AG04449 (cell line): ENCODE measurements at regions of chr12 and their contacts with region 1.

Region 1: GRCh38 chr12:57111031-57111734 is at the start of gene STAT6:
- DNase-seq: no peak
- H3K4me3 ChIP-seq: peak within 1 kb of the TSS; percentile 73
- CTCF ChIP-seq: no peak

Region 2: DNA sequence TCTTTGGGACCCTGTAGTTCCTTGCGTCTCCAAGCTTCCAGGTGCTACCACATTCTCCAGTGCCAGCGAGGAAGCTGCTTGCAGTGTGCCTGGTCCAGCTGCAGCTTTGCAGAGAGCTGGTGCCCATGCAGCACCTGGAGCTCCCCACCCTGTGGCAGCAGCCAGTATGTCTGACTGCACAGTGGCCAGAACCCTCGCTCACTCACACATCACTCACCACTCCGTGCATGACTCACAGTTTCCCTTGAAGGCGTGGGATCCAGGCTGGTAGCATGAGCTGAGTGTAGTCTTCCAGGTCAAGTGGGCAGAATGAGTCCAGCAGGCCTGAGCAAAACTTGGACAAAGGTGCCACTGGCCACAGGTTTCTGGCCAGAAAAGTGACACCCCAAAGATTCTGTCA is 210.6 kb before region 1 on chr12:
- CTCF ChIA-PET with region 1: no interaction called
- POLR2A ChIA-PET with region 1: no interaction called
- DNase-seq: no peak
- H3K4me3 ChIP-seq: no peak overlapping the region
- CTCF ChIP-seq: no peak

Region 3: GRCh38 chr12:57005980-57006808 is 105.0 kb before region 1 on chr12 and contains the start of gene ZBTB39:
- CTCF ChIA-PET with region 1: interaction called, 26 read pairs
- POLR2A ChIA-PET with region 1: interaction called, 3 read pairs
- DNase-seq: no peak
- H3K4me3 ChIP-seq: peak within 1 kb of the TSS; percentile 78
- CTCF ChIP-seq: peak; percentile 64

Region 4: DNA sequence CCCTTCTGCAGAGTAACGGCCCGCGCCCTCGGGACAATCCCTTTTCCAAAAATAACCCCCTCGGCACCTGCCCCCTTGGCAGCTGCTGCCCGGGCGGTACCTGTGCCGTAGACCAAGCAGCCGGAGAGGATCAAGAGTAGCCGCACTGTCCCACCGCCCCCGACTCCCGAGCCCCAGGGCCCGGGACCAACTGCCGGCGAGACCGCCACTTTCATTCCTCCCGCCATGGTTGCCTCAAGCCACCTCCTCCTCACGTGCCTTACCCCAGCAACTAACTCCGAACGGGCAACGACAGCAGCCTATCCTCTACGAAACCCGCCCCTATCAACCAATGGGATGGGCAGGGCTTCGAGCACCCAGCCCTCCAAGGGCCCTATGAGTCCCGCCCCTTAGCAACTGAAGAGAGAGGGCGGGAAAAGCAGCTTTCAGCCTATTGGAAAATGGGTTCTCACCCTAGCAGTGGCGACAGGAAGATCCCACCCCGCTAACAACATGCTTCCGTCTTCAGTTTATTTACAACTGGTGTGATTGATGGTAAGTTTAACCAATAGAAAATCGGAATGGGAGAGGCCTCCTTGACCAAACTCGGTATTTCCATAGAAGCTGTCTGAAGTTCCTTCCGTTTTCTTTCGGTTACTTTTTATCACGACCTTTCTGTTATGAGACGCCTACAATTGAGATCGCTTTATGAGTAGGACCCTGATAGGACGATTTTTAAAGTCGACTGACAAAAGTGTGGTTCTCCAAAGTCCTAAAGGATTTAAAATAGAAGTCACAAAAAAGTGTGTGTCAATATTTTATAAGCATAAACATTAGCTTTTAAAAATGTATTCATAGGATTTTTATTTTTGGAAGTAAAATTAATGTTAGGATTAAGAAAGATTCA is 32.4 kb before region 1 on chr12 and contains the start of gene NEMP1:
- CTCF ChIA-PET with region 1: interaction called, 148 read pairs
- POLR2A ChIA-PET with region 1: interaction called, 17 read pairs
- DNase-seq: peak; percentile 100
- H3K4me3 ChIP-seq: peak within 1 kb of the TSS; percentile 77
- CTCF ChIP-seq: no peak

Region 5: DNA sequence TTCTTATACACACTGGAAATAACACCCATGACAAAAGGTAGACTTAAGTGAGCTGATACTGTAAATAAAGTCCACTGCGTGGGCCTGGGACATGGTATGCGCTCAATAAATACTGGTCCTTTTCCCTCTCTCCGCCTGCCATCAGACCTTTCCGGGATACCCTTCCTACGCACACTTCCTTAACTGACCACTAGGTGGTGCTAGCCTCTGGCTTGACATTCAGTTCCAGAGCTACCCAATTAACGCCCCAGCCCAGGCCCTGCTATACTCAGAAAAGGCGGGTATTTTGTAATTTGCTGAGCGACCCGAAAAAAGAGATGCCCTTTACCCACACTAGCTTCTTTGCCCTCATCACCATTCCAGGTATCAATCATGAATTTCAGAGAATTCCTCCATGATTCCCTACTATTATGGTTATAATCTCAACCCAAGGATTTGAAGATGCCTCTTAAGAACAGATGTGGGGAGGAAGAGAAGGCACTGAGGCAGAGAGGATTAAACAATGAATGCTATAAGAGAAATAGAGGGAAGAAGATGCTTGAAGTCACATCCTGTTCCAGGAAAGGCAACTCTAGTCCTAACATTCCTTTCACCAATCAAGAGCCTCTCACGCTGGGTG is 13.2 kb after region 1 on chr12:
- CTCF ChIA-PET with region 1: interaction called, 160 read pairs
- POLR2A ChIA-PET with region 1: interaction called, 23 read pairs
- DNase-seq: no peak
- H3K4me3 ChIP-seq: no peak overlapping the region
- CTCF ChIP-seq: peak; percentile 88

Region 6: DNA sequence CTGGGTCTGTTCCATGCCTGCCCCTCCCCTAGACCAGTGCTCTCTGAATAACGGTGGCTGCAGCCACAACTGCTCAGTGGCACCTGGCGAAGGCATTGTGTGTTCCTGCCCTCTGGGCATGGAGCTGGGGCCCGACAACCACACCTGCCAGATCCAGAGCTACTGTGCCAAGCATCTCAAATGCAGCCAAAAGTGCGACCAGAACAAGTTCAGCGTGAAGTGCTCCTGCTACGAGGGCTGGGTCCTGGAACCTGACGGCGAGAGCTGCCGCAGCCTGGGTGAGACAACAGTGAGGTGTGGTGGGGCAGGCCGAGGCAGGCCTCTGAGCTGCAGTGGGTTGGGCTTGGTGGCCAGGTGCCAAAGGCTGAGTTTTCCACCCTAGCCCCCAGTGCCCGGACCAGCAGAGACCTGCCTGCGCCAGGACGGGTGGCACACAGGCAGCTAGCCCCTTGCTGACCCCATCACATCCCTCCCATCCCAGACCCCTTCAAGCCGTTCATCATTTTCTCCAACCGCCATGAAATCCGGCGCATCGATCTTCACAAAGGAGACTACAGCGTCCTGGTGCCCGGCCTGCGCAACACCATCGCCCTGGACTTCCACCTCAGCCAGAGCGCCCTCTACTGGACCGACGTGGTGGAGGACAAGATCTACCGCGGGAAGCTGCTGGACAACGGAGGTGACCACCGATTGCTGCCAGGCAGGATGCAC is 64.4 kb after region 1 on chr12:
- CTCF ChIA-PET with region 1: interaction called, 874 read pairs
- POLR2A ChIA-PET with region 1: interaction called, 3 read pairs
- DNase-seq: no peak
- H3K4me3 ChIP-seq: no peak overlapping the region
- CTCF ChIP-seq: peak; percentile 91

Region 7: DNA sequence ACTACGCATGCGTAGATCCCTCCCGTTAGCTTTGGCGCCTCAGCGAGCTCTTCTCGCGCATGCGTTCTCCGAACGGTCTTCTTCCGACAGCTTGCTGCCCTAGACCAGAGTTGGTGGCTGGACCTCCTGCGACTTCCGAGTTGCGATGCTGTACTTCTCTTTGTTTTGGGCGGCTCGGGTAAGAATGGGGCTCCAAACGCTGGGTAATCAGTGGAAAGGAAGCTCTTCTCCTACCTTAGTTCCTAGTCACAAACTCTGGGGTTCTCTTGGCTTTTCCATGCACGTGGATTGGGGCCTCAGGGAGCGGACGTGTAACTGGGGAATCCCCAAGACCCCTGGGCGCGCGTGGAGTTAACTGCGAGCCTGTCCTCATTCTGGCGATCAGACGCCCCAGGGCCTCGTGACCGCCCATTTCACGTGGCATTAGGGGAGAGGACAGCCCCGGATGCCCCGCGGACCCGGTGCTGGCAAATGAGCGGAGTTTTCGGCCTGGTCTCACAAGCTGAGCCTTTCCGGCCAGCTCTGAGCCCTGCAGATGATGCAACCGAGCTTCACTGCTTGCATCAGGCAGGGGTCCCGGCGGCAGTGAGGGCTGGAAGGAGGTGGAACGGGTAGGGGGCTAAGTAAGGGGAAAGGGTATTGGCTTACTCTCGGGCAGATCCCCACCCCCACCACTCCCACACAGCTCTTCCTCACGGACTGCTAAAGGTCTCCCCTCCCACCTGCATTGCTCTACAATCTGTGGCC is 118.6 kb after region 1 on chr12 and contains the start of gene SHMT2:
- CTCF ChIA-PET with region 1: interaction called, 7 read pairs
- POLR2A ChIA-PET with region 1: interaction called, 10 read pairs
- DNase-seq: peak; percentile 78
- H3K4me3 ChIP-seq: peak within 1 kb of the TSS; percentile 93
- CTCF ChIP-seq: no peak